Activated CD4-positive, alpha-beta T cell treated with anti-CD3 and anti-CD28 coated beads for 36 hours (primary cell): ENCODE measurements at regions of chr12 and their contacts with region 1.

Region 1: GRCh38 chr12:41277116-41277945 is 89.2 kb downstream of the PDZRN4 start:
- DNase-seq: peak; percentile 30
- ATAC-seq: no peak
- H3K4me3 Mint-ChIP-seq: no peak overlapping the region
- H3K27ac Mint-ChIP-seq: no peak overlapping the region
- H3K4me1 Mint-ChIP-seq: no peaks in the 10 kb centered on the region
- H3K27me3 Mint-ChIP-seq: peaks cover 9% of the 10 kb centered on the region

Region 2: GRCh38 chr12:40393031-40393430 is 884.3 kb before region 1 on chr12:
- CTCF ChIA-PET with region 1: no interaction called
- POLR2A ChIA-PET with region 1: no interaction called
- intact Hi-C with region 1: no loop called
- DNase-seq: no peak
- ATAC-seq: no peak
- H3K4me3 Mint-ChIP-seq: no peak overlapping the region
- H3K27ac Mint-ChIP-seq: no peak overlapping the region
- H3K4me1 Mint-ChIP-seq: no peaks in the 10 kb centered on the region
- H3K27me3 Mint-ChIP-seq: no peaks in the 10 kb centered on the region

Region 3: GRCh38 chr12:42104087-42104486 is 826.8 kb after region 1 on chr12:
- CTCF ChIA-PET with region 1: no interaction called
- POLR2A ChIA-PET with region 1: no interaction called
- intact Hi-C with region 1: loop called in 1 of 2 experiments (anchors 10 kb)
- DNase-seq: no peak
- ATAC-seq: no peak
- H3K4me3 Mint-ChIP-seq: no peak overlapping the region
- H3K27ac Mint-ChIP-seq: no peak overlapping the region
- H3K4me1 Mint-ChIP-seq: no peaks in the 10 kb centered on the region
- H3K27me3 Mint-ChIP-seq: no peaks in the 10 kb centered on the region

Region 4: GRCh38 chr12:42568952-42569915 is 1291.9 kb after region 1 on chr12:
- CTCF ChIA-PET with region 1: no interaction called
- POLR2A ChIA-PET with region 1: no interaction called
- intact Hi-C with region 1: loop called in 1 of 2 experiments (anchors 2 kb)
- DNase-seq: no peak
- ATAC-seq: no peak
- H3K4me3 Mint-ChIP-seq: no peak overlapping the region
- H3K27ac Mint-ChIP-seq: no peak overlapping the region
- H3K4me1 Mint-ChIP-seq: no peaks in the 10 kb centered on the region
- H3K27me3 Mint-ChIP-seq: peaks cover 10% of the 10 kb centered on the region